GM23248 (cell line): ENCODE measurements at regions of chr18 and their contacts with region 1.

Region 1: GRCh38 chr18:23032030-23032582 is 99.0 kb downstream of the RBBP8 start:
- DNase-seq: peak; percentile 88
- H3K4me3 ChIP-seq: peak overlapping the region; percentile 55
- H3K27ac ChIP-seq: peak overlapping the region; percentile 91
- H3K4me1 ChIP-seq: peaks cover 27% of the 10 kb centered on the region
- H3K27me3 ChIP-seq: no peaks in the 10 kb centered on the region

Region 2: GRCh38 chr18:23115683-23116096 is 83.6 kb after region 1 on chr18:
- in situ Hi-C with region 1: loop called (anchors 10 kb)
- DNase-seq: peak; percentile 99
- H3K4me3 ChIP-seq: no peak overlapping the region
- H3K27ac ChIP-seq: peak overlapping the region; percentile 85
- H3K4me1 ChIP-seq: peaks cover 26% of the 10 kb centered on the region
- H3K27me3 ChIP-seq: no peaks in the 10 kb centered on the region

Region 3: DNA sequence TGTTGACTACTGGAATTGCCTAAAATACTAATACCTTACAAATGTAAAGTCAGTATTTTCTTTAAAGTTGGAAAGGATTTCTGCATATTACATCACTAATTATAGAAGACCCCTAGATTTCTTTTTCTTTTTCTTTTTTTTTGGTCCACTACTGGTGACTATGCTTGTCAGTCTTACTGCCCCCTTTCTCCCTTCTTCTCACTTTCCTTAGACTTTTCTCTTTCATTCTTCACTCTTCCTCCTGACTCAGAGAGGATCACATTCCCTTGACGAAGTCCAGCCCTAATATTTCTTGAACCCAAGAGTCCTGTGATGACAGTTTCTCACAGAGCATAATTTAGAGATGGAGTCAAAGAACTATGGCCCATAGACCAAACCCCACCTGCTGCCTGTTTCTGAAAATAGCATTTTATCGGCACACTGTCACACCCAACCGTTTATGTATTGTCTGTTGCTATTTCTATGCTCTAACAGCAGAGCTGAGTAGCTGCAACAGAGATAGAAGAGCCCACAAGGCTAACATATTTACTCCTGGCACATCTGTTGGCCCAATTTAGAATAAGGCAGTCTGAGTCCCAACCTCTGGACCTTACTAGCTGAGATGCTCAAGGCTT is 380.4 kb after region 1 on chr18:
- in situ Hi-C with region 1: loop called (anchors 5 kb)
- DNase-seq: no peak
- H3K4me3 ChIP-seq: no peak overlapping the region
- H3K27ac ChIP-seq: no peak overlapping the region
- H3K4me1 ChIP-seq: peaks cover 5% of the 10 kb centered on the region
- H3K27me3 ChIP-seq: no peaks in the 10 kb centered on the region